Naive thymus-derived CD4-positive, alpha-beta T cell (primary cell): ENCODE measurements at regions of chr17 and their contacts with region 1.

Region 1: GRCh38 chr17:17591355-17592298 is at the start of gene PEMT:
- DNase-seq: peak; percentile 78 to 96 (median 93)
- ATAC-seq: peak; percentile 95
- H3K4me3 ChIP-seq: peak within 1 kb of the TSS; percentile 93
- H3K4me3 Mint-ChIP-seq: peak within 1 kb of the TSS; percentile 87 to 99 (median 93)
- H3K27ac ChIP-seq: peak within 1 kb of the TSS; percentile 79
- H3K27ac Mint-ChIP-seq: peak within 1 kb of the TSS; percentile 86 to 100 (median 93)
- H3K4me1 ChIP-seq: peaks cover 16 to 18% of the 10 kb centered on the region in 2 donors
- H3K4me1 Mint-ChIP-seq: peaks cover 14 to 32% (median 19%) of the 10 kb centered on the region in 7 donors
- H3K27me3 ChIP-seq: no peaks in the 10 kb centered on the region
- H3K27me3 Mint-ChIP-seq: no peaks in the 10 kb centered on the region
- total RNA-seq, gene PEMT: 9.5 to 15.0 (median 12.1) TPM

Region 2: DNA sequence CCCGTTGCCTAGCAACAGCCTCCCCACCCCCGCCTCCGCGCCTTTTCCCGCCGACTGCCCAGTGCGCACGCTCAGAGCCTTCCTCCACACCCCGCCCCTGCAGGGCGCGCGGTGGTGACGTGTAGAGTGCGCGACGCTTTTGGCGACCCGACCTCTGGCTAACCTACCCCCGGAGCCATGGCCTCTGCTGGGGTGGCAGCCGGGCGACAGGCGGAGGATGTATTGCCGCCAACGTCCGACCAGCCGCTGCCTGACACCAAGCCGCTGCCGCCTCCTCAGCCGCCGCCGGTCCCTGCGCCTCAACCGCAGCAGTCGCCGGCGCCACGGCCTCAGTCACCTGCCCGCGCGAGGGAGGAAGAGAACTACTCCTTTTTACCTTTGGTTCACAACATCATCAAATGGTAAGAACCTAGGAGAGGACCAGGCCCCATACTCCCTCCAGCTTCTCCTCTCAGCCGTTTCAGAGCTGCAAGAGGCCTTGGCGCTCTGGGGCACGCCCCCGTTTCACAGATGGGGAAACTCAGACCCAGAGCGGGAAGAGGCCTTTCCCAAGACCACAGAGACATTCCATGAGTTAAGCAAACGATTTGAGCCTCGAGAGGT is 114.7 kb before region 1 on chr17 and contains the start of gene MED9:
- CTCF ChIA-PET with region 1: no interaction called
- POLR2A ChIA-PET with region 1: no interaction called
- intact Hi-C with region 1: loop called (anchors 1 kb)
- DNase-seq: peak; percentile 90 to 98 (median 94)
- ATAC-seq: peak; percentile 100
- H3K4me3 ChIP-seq: peak within 1 kb of the TSS; percentile 98
- H3K4me3 Mint-ChIP-seq: peak within 1 kb of the TSS; percentile 85 to 92 (median 92)
- H3K27ac ChIP-seq: peak within 1 kb of the TSS; percentile 87
- H3K27ac Mint-ChIP-seq: peak within 1 kb of the TSS; percentile 72 to 95 (median 92)
- H3K4me1 ChIP-seq: peaks cover 10 to 29% of the 10 kb centered on the region in 2 donors
- H3K4me1 Mint-ChIP-seq: peaks cover 20 to 58% (median 49%) of the 10 kb centered on the region in 7 donors
- H3K27me3 ChIP-seq: no peaks in the 10 kb centered on the region
- H3K27me3 Mint-ChIP-seq: peaks cover 0 to 11% (median 0%) of the 10 kb centered on the region in 5 donors
- total RNA-seq, gene MED9: 14.0 to 24.1 (median 17.2) TPM

Region 3: GRCh38 chr17:17613708-17614114 is 22.1 kb after region 1 on chr17:
- CTCF ChIA-PET with region 1: interaction called, 3 read pairs
- POLR2A ChIA-PET with region 1: no interaction called
- intact Hi-C with region 1: loop called in 1 of 2 experiments (anchors 2 kb)
- DNase-seq: peak in 8 of 9 donors; percentile 15 to 54 (median 42)
- ATAC-seq: peak; percentile 89
- H3K4me3 ChIP-seq: no peak overlapping the region
- H3K4me3 Mint-ChIP-seq: no peak overlapping the region
- H3K27ac ChIP-seq: no peak overlapping the region
- H3K27ac Mint-ChIP-seq: peak overlapping the region in 1 of 9 donors; percentile 82
- H3K4me1 ChIP-seq: no peaks in the 10 kb centered on the region
- H3K4me1 Mint-ChIP-seq: peaks cover 0 to 6% (median 2%) of the 10 kb centered on the region in 7 donors
- H3K27me3 ChIP-seq: no peaks in the 10 kb centered on the region
- H3K27me3 Mint-ChIP-seq: no peaks in the 10 kb centered on the region

Region 4: GRCh38 chr17:17681187-17681848 is 89.7 kb after region 1 on chr17 and contains the start of gene RAI1:
- CTCF ChIA-PET with region 1: no interaction called
- POLR2A ChIA-PET with region 1: no interaction called
- intact Hi-C with region 1: no loop called
- DNase-seq: peak; percentile 64 to 87 (median 79)
- ATAC-seq: peak; percentile 82
- H3K4me3 ChIP-seq: peak within 1 kb of the TSS; percentile 62
- H3K4me3 Mint-ChIP-seq: peak within 1 kb of the TSS; percentile 84 to 92 (median 89)
- H3K27ac ChIP-seq: peak within 1 kb of the TSS; percentile 93
- H3K27ac Mint-ChIP-seq: peak within 1 kb of the TSS in 7 of 9 donors; percentile 59 to 90 (median 77)
- H3K4me1 ChIP-seq: peaks cover 7 to 17% of the 10 kb centered on the region in 2 donors
- H3K4me1 Mint-ChIP-seq: peaks cover 14 to 42% (median 37%) of the 10 kb centered on the region in 7 donors
- H3K27me3 ChIP-seq: no peaks in the 10 kb centered on the region
- H3K27me3 Mint-ChIP-seq: peaks cover 0 to 16% (median 0%) of the 10 kb centered on the region in 5 donors
- total RNA-seq, gene RAI1: 20.1 to 46.2 (median 23.6) TPM

Region 5: GRCh38 chr17:17836250-17836817 is 244.7 kb after region 1 on chr17:
- CTCF ChIA-PET with region 1: no interaction called
- POLR2A ChIA-PET with region 1: no interaction called
- intact Hi-C with region 1: loop called (anchors 5 to 10 kb)
- DNase-seq: peak; percentile 93 to 99 (median 97)
- ATAC-seq: peak; percentile 85
- H3K4me3 ChIP-seq: peak overlapping the region; percentile 86
- H3K4me3 Mint-ChIP-seq: peak overlapping the region; percentile 85 to 95 (median 90)
- H3K27ac ChIP-seq: peak overlapping the region; percentile 99
- H3K27ac Mint-ChIP-seq: peak overlapping the region; percentile 94 to 99 (median 98)
- H3K4me1 ChIP-seq: peaks cover 18 to 60% of the 10 kb centered on the region in 2 donors
- H3K4me1 Mint-ChIP-seq: peaks cover 46 to 79% (median 75%) of the 10 kb centered on the region in 7 donors
- H3K27me3 ChIP-seq: no peaks in the 10 kb centered on the region
- H3K27me3 Mint-ChIP-seq: no peaks in the 10 kb centered on the region

Region 6: GRCh38 chr17:18087610-18088491 is 496.2 kb after region 1 on chr17 and contains the start of gene DRG2:
- CTCF ChIA-PET with region 1: no interaction called
- POLR2A ChIA-PET with region 1: no interaction called
- intact Hi-C with region 1: loop called (anchors 1 kb)
- DNase-seq: peak; percentile 79 to 94 (median 85)
- ATAC-seq: peak; percentile 98
- H3K4me3 ChIP-seq: peak within 1 kb of the TSS; percentile 84
- H3K4me3 Mint-ChIP-seq: peak within 1 kb of the TSS; percentile 97 to 100 (median 98)
- H3K27ac ChIP-seq: peak within 1 kb of the TSS; percentile 85
- H3K27ac Mint-ChIP-seq: peak within 1 kb of the TSS; percentile 96 to 99 (median 98)
- H3K4me1 ChIP-seq: peaks cover 9 to 12% of the 10 kb centered on the region in 2 donors
- H3K4me1 Mint-ChIP-seq: peaks cover 19 to 35% (median 27%) of the 10 kb centered on the region in 7 donors
- H3K27me3 ChIP-seq: no peaks in the 10 kb centered on the region
- H3K27me3 Mint-ChIP-seq: no peaks in the 10 kb centered on the region
- total RNA-seq, gene DRG2: 39.6 to 54.7 (median 48.8) TPM